Heart right ventricle (tissue), 16 donors: ENCODE measurements at regions of chrX and their contacts with region 1.

Region 1: DNA sequence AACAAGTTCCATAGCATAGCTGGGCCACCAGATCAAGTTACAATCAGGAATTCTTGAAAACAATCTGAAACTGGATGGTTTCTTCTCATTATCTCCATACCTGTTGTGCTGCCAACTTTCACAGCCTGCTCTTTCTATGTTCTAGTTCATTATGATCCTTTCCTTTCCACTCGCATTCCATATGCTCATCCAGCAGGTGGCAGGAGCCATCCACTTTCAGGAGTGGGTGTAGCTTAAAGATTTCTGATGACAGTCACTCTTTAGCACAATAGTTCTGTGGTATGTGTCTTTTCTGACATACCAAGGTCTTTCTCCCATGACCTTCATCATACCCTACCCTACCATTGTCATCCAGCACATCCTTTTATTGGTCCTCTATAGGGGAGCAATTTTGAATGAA is 46.4 kb downstream of the PAGE2 start:
- DNase-seq: peak; percentile 9 to 11
- ATAC-seq: peak in 6 of 8 donors; percentile 46 to 74 (median 67)
- H3K4me3 ChIP-seq: no peak overlapping the region
- H3K27ac ChIP-seq: no peak overlapping the region
- H3K4me1 ChIP-seq: no peaks in the 10 kb centered on the region
- H3K27me3 ChIP-seq: peaks cover 0 to 24% (median 0%) of the 10 kb centered on the region in 7 donors
- CTCF ChIP-seq: peak; percentile 30 to 67 (median 53)

Region 2: GRCh38 chrX:55326985-55327384 is 191.8 kb after region 1 on chrX:
- intact Hi-C with region 1: loop called in 3 of 10 experiments (anchors 5 to 10 kb)
- DNase-seq: peak in 1 of 2 donors; percentile 50
- ATAC-seq: peak; percentile 78 to 98 (median 94)
- H3K4me3 ChIP-seq: no peak overlapping the region
- H3K27ac ChIP-seq: peak overlapping the region in 8 of 10 donors; percentile 45 to 90 (median 68)
- H3K4me1 ChIP-seq: peaks cover 0 to 12% (median 0%) of the 10 kb centered on the region in 9 donors
- H3K27me3 ChIP-seq: peaks cover 0 to 22% (median 0%) of the 10 kb centered on the region in 7 donors
- CTCF ChIP-seq: no peak

Region 3: DNA sequence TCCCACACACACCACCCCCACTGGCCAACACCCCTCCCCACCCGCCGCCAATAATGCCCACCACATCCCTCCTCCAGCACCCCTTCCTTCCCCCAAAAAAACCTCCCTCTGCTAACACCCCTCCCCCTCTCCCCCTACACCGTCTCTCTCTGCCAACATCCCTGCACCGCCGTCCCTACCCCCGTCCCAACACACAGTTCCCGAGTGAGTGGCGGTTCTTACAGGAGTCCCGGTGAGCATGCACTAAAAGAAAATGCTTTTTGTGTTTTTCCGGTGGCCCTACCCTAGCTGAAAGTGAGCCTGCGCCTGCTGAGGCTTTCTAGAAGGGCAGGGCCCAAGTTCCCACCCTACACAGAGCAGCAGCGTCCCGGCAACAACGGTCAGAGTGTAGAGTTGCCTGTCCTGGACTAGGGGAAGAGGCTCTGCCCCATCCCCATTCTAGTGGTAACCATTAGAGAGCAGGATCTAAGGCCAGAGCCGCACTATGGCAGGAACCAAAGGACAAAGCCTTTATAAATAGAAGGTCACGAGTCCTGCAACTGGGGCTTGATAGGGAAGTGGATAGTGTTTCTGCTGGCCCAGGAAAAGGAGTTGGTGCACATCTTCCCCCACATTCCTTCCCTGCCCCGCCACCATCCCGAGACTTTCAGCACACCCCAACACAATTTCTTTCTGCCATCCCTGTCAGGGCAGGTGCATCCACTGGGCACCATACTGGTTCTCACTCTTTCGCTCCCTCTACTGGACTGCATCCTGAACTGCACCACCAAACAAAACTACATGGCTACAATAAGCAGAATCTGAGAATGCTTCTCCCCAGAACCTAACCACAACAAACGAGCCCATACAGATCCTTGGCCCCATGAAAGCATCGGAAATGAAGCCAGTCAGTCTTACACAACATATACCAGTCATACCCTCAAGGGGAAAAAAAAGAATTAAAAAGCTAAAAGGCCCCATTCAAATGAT is 207.6 kb after region 1 on chrX:
- intact Hi-C with region 1: loop called in 6 of 10 experiments (anchors 2 to 10 kb)
- DNase-seq: peak; percentile 5 to 7
- ATAC-seq: peak; percentile 43 to 84 (median 61)
- H3K4me3 ChIP-seq: peak overlapping the region in 1 of 10 donors; percentile 20
- H3K27ac ChIP-seq: peak overlapping the region in 5 of 10 donors; percentile 19 to 66 (median 41)
- H3K4me1 ChIP-seq: peaks cover 0 to 3% (median 0%) of the 10 kb centered on the region in 9 donors
- H3K27me3 ChIP-seq: peaks cover 0 to 14% (median 0%) of the 10 kb centered on the region in 7 donors
- CTCF ChIP-seq: peak in 7 of 9 donors; percentile 51 to 66 (median 54)

Region 4: DNA sequence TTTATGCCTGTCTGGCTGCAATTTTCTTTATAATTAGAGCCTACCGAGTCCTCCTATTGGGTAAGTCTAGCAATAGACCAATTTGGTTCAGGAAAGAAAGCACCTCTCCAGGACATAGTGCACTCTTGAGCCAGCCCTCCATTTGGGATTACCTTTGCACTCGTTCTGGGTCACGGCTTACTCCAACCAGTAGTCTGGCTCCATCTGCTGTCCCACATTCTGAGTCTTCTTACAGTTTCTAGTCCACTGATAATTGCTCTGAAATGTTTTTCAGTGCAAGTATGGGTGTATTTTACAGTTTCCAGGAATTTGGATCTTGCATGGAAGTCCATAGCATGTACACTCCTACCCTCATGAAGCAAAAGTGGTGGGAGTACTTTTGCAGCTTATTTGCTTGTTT is 389.3 kb after region 1 on chrX:
- intact Hi-C with region 1: loop called in 1 of 10 experiments (anchors 10 kb)
- DNase-seq: no peak
- ATAC-seq: peak in 1 of 8 donors; percentile 44
- H3K4me3 ChIP-seq: no peak overlapping the region
- H3K27ac ChIP-seq: no peak overlapping the region
- H3K4me1 ChIP-seq: no peaks in the 10 kb centered on the region
- H3K27me3 ChIP-seq: peaks cover 0 to 19% (median 0%) of the 10 kb centered on the region in 7 donors
- CTCF ChIP-seq: peak in 4 of 9 donors; percentile 14 to 41 (median 22)

Region 5: GRCh38 chrX:55717521-55718497 is 582.6 kb after region 1 on chrX and contains the start of gene RRAGB:
- intact Hi-C with region 1: loop called in 1 of 10 experiments (anchors 10 kb)
- DNase-seq: peak; percentile 91 to 93
- ATAC-seq: peak; percentile 100
- H3K4me3 ChIP-seq: peak within 1 kb of the TSS; percentile 32 to 85 (median 74)
- H3K27ac ChIP-seq: peak within 1 kb of the TSS; percentile 24 to 94 (median 84)
- H3K4me1 ChIP-seq: peaks cover 0 to 21% (median 4%) of the 10 kb centered on the region in 9 donors
- H3K27me3 ChIP-seq: no peaks in the 10 kb centered on the region
- CTCF ChIP-seq: peak; percentile 10 to 62 (median 47)
- total RNA-seq, gene RRAGB: 9.2 to 13.3 (median 10.8) TPM

Region 6: GRCh38 chrX:56248492-56248891 is 1113.3 kb after region 1 on chrX:
- intact Hi-C with region 1: loop called in 1 of 10 experiments (anchors 10 kb)
- DNase-seq: peak; percentile 26 to 45
- ATAC-seq: peak in 5 of 8 donors; percentile 38 to 58 (median 49)
- H3K4me3 ChIP-seq: no peak overlapping the region
- H3K27ac ChIP-seq: no peak overlapping the region
- H3K4me1 ChIP-seq: peaks cover 0 to 4% (median 0%) of the 10 kb centered on the region in 9 donors
- H3K27me3 ChIP-seq: peaks cover 0 to 11% (median 0%) of the 10 kb centered on the region in 7 donors
- CTCF ChIP-seq: peak; percentile 28 to 71 (median 65)